GM18951 (cell line): ENCODE measurements at regions of chr12 and their contacts with region 1.

Region 1: DNA sequence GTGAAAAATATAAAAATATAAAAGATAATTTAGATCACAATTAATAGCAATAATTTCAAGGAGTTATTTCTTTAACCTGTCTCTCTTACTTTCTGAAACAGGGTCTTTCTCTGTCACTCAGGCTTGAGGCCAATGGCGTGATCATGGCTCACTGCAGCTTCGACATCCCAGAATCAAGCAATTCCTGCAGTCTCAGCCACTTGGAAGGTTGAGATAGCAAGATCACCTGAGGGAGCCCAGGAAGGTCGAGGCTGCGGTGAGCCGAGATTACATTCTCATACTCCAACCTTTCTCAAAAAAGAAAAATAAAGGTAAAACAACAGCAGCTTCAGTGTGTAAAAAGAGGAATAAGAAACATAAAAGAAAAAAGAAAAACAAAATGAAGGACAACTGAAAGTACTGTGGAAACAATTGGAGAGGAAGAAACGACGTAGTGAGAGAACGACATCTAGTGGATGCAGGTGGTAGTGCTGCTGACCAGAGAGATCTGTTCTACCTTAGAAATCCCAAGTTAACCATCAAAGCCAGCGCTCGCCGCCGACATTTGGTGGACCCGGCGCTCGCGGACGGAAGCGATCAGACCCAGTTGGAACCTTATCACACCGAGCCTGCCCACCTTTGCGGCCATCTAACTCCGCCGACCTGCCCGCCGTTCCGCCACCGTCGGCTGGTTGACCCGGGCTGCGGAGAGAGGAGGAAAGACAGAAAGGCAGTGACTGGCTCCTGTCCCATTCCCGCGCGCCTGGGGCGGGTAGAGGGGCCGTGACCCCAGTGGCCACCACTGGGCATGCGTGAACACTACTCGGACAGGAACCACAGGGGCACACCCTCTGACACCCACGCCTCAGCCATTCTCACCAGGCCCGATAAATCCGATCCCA is 196.1 kb downstream of the ALG10 start:
- POLR2A ChIP-seq: no peak

Region 2: GRCh38 chr12:34275129-34275528 is 56.7 kb after region 1 on chr12:
- in situ Hi-C with region 1: no loop called
- POLR2A ChIP-seq: no peak

Region 3: DNA sequence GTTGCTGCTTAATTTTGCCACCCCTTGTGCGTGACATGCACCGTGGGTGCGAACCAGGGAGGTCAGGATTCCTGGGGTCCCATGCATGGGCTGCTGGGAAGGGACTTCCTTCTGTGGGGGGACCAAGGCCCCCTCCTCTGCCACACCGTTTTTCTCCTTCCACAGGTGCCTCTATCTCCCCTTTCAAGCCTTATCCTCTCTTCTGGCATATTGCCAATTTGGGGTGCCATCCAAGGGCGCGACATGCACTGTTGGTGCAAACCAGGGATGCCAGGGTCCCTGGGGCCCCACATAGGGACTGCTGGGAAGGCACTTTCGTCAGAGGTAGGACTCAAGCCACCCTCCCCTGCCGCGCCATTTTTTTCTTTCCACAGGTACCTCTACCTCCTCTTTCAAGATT is 92.9 kb after region 1 on chr12:
- in situ Hi-C with region 1: no loop called
- POLR2A ChIP-seq: no peak

Region 4: GRCh38 chr12:34625116-34625515 is 406.7 kb after region 1 on chr12:
- in situ Hi-C with region 1: loop called (anchors 10 kb)
- POLR2A ChIP-seq: no peak